CD4-positive, alpha-beta memory T cell (primary cell): ENCODE measurements at regions of chr18 and their contacts with region 1.

Region 1: GRCh38 chr18:741931-742512 is 29.6 kb upstream of the ENOSF1 start:
- DNase-seq: peak in 4 of 5 donors; percentile 45 to 53 (median 50)
- H3K4me3 ChIP-seq: no peak overlapping the region
- H3K4me3 Mint-ChIP-seq: no peak overlapping the region
- H3K27ac ChIP-seq: no peak overlapping the region
- H3K27ac Mint-ChIP-seq: no peak overlapping the region
- H3K4me1 ChIP-seq: no peaks in the 10 kb centered on the region
- H3K4me1 Mint-ChIP-seq: peaks cover 0 to 2% (median 1%) of the 10 kb centered on the region in 4 donors
- H3K27me3 ChIP-seq: no peaks in the 10 kb centered on the region
- H3K27me3 Mint-ChIP-seq: no peaks in the 10 kb centered on the region

Region 2: GRCh38 chr18:293536-293935 is 448.5 kb before region 1 on chr18:
- CTCF ChIA-PET with region 1: no interaction called
- POLR2A ChIA-PET with region 1: no interaction called
- intact Hi-C with region 1: no loop called
- DNase-seq: no peak
- H3K4me3 ChIP-seq: no peak overlapping the region
- H3K4me3 Mint-ChIP-seq: no peak overlapping the region
- H3K27ac ChIP-seq: no peak overlapping the region
- H3K27ac Mint-ChIP-seq: no peak overlapping the region
- H3K4me1 ChIP-seq: no peaks in the 10 kb centered on the region
- H3K4me1 Mint-ChIP-seq: no peaks in the 10 kb centered on the region
- H3K27me3 ChIP-seq: no peaks in the 10 kb centered on the region
- H3K27me3 Mint-ChIP-seq: peaks cover 4 to 11% of the 10 kb centered on the region in 2 donors

Region 3: GRCh38 chr18:623761-624620 is 118.0 kb before region 1 on chr18:
- CTCF ChIA-PET with region 1: interaction called, 7 read pairs
- POLR2A ChIA-PET with region 1: no interaction called
- intact Hi-C with region 1: loop called (anchors 1 kb)
- DNase-seq: peak; percentile 30 to 58 (median 44)
- H3K4me3 ChIP-seq: no peak overlapping the region
- H3K4me3 Mint-ChIP-seq: no peak overlapping the region
- H3K27ac ChIP-seq: no peak overlapping the region
- H3K27ac Mint-ChIP-seq: no peak overlapping the region
- H3K4me1 ChIP-seq: no peaks in the 10 kb centered on the region
- H3K4me1 Mint-ChIP-seq: peaks cover 0 to 2% (median 0%) of the 10 kb centered on the region in 4 donors
- H3K27me3 ChIP-seq: no peaks in the 10 kb centered on the region
- H3K27me3 Mint-ChIP-seq: peaks cover 3 to 26% of the 10 kb centered on the region in 2 donors

Region 4: DNA sequence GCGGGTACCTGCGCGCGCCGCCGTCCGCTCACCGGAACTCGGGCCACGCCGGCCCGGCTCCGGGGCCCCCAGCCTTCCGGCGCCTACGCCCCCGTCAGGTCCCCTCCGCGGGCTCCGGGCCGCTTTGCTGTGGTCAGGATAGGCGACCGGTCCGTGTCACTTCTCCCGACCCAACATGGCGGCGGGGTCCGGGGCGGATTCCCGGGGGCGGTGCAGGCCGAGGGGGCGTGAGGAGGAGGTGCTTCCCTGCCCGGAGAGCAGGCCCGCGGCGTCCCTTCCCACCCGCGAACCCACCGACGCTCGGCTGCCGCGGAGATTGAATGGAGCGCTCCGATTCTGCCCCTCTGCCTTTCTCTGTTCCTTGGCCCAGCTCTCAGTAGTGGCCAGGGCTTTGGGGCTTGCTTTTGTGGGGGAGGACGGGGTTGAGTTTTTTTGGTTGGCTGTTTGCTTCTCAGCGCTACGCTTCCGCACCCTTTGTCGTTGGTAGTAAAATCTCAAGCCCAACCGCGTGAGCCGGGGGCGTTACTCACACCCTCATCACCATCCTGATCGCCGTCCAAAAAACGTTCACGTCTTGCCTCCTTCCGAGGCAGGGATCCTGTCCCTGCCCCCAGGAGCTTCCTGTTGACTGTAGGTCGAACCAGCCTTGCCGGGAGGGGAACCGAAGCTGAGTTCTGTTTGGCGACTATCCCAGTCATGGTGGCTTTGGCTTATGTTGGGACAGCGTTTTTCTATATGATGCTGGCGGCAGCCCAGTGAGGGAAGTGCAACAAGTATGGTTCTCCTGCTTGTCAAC is 70.6 kb after region 1 on chr18:
- CTCF ChIA-PET with region 1: interaction called, 4 read pairs
- POLR2A ChIA-PET with region 1: no interaction called
- intact Hi-C with region 1: loop called (anchors 1 kb)
- DNase-seq: peak; percentile 80 to 86 (median 81)
- H3K4me3 ChIP-seq: peak overlapping the region; percentile 64 to 76
- H3K4me3 Mint-ChIP-seq: peak overlapping the region; percentile 83 to 97 (median 94)
- H3K27ac ChIP-seq: peak overlapping the region; percentile 80
- H3K27ac Mint-ChIP-seq: peak overlapping the region; percentile 97 to 99 (median 98)
- H3K4me1 ChIP-seq: peaks cover 58% of the 10 kb centered on the region
- H3K4me1 Mint-ChIP-seq: peaks cover 40 to 58% (median 50%) of the 10 kb centered on the region in 4 donors
- H3K27me3 ChIP-seq: no peaks in the 10 kb centered on the region
- H3K27me3 Mint-ChIP-seq: peaks cover 0 to 5% of the 10 kb centered on the region in 2 donors

Region 5: DNA sequence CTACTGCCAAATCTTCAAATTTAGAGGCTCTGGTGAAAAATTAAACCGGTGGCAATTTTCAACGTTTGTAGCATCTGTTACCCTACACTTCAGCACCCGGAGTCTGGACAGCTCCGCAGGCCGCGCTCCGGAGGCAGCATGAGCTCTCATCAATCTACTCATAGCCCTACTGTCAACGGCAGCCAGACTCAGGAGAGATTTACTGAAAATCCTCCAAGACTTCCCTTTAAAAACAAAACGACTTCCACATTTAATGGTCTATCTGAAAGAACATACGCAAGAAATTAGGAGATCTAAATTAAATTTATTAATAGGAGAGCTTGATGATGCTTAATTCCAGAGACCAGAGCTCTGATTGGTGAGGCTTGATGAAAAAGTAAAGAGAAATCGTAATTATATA is 161.7 kb after region 1 on chr18:
- CTCF ChIA-PET with region 1: no interaction called
- POLR2A ChIA-PET with region 1: no interaction called
- intact Hi-C with region 1: no loop called
- DNase-seq: peak; percentile 18 to 51 (median 27)
- H3K4me3 ChIP-seq: no peak overlapping the region
- H3K4me3 Mint-ChIP-seq: peak overlapping the region in 1 of 8 donors; percentile 59
- H3K27ac ChIP-seq: no peak overlapping the region
- H3K27ac Mint-ChIP-seq: peak overlapping the region in 1 of 7 donors; percentile 28
- H3K4me1 ChIP-seq: peaks cover 21% of the 10 kb centered on the region
- H3K4me1 Mint-ChIP-seq: peaks cover 4 to 18% (median 10%) of the 10 kb centered on the region in 4 donors
- H3K27me3 ChIP-seq: peaks cover 44% of the 10 kb centered on the region
- H3K27me3 Mint-ChIP-seq: peaks cover 51 to 54% of the 10 kb centered on the region in 2 donors